Common myeloid progenitor, CD34-positive (primary cell): ENCODE measurements at regions of chr1 and their contacts with region 1.

Region 1: GRCh38 chr1:16289963-16290362 is 53.0 kb upstream of the CPLANE2 start:
- DNase-seq: no peak
- H3K4me3 ChIP-seq: no peak overlapping the region
- H3K27ac ChIP-seq: no peak overlapping the region
- H3K4me1 ChIP-seq: peaks cover 0 to 8% (median 0%) of the 10 kb centered on the region in 4 experiments
- H3K27me3 ChIP-seq: no peaks in the 10 kb centered on the region

Region 2: DNA sequence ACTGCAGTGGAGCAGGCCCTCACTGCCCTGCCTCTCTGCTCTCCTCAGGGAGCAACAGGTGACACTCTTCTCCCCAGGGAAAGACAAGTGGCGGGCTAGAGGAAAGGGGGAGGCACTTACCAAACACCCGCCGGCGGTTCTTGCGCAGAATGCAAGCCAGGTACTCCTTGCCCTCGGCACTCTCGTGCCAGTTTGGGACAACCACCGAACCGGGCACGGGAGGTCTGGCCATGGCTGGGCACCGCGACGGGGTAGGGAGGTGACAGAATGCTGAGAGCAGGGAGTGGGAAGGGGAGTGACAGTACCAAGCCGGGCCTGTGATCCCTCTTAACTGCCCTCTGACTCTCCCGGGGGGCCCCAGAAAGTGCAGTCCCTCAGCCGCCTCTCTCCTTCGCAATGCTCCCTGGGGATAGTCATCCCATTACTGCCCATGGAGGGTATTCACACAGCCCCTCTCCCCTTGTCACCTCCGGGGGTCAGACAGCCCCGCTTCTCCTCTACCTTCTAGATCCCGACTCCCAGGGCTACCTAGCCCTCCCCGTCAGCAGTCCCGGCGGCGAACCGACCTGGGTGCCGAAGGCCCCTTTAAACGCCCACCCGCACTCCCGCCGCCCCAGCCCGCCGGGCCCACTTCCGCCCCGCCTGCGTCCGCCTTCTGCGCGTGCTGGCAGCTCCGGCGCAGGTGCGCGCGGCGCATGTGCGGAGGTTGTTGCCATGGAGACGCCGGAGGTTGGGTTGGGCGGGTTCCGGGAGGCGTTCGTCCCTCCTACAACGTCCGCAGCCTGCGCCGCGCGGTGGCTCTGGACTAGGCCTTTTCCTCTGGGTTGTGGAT is 53.2 kb before region 1 on chr1 and contains the start of gene CPLANE2:
- CTCF ChIA-PET with region 1: no interaction called
- POLR2A ChIA-PET with region 1: no interaction called
- DNase-seq: peak; percentile 91 to 96 (median 95)
- H3K4me3 ChIP-seq: peak within 1 kb of the TSS; percentile 53 to 86 (median 80)
- H3K27ac ChIP-seq: peak within 1 kb of the TSS; percentile 79 to 94
- H3K4me1 ChIP-seq: peaks cover 5 to 21% (median 18%) of the 10 kb centered on the region in 4 experiments
- H3K27me3 ChIP-seq: no peaks in the 10 kb centered on the region

Region 3: GRCh38 chr1:16334655-16335340 is 44.8 kb after region 1 on chr1:
- CTCF ChIA-PET with region 1: no interaction called
- POLR2A ChIA-PET with region 1: no interaction called
- DNase-seq: peak in 2 of 3 donors; percentile 20 to 44
- H3K4me3 ChIP-seq: no peak overlapping the region
- H3K27ac ChIP-seq: no peak overlapping the region
- H3K4me1 ChIP-seq: peaks cover 0 to 2% (median 0%) of the 10 kb centered on the region in 4 experiments
- H3K27me3 ChIP-seq: no peaks in the 10 kb centered on the region

Region 4: GRCh38 chr1:16396591-16396990 is 106.6 kb after region 1 on chr1:
- CTCF ChIA-PET with region 1: no interaction called
- POLR2A ChIA-PET with region 1: no interaction called
- DNase-seq: no peak
- H3K4me3 ChIP-seq: no peak overlapping the region
- H3K27ac ChIP-seq: no peak overlapping the region
- H3K4me1 ChIP-seq: peaks cover 0 to 19% (median 9%) of the 10 kb centered on the region in 4 experiments
- H3K27me3 ChIP-seq: no peaks in the 10 kb centered on the region

Region 5: GRCh38 chr1:16434501-16434900 is 144.5 kb after region 1 on chr1:
- CTCF ChIA-PET with region 1: no interaction called
- POLR2A ChIA-PET with region 1: interaction called, 10 read pairs
- DNase-seq: peak in 2 of 3 donors; percentile 15 to 40
- H3K4me3 ChIP-seq: no peak overlapping the region
- H3K27ac ChIP-seq: no peak overlapping the region
- H3K4me1 ChIP-seq: peaks cover 0 to 8% (median 0%) of the 10 kb centered on the region in 4 experiments
- H3K27me3 ChIP-seq: no peaks in the 10 kb centered on the region

Region 6: DNA sequence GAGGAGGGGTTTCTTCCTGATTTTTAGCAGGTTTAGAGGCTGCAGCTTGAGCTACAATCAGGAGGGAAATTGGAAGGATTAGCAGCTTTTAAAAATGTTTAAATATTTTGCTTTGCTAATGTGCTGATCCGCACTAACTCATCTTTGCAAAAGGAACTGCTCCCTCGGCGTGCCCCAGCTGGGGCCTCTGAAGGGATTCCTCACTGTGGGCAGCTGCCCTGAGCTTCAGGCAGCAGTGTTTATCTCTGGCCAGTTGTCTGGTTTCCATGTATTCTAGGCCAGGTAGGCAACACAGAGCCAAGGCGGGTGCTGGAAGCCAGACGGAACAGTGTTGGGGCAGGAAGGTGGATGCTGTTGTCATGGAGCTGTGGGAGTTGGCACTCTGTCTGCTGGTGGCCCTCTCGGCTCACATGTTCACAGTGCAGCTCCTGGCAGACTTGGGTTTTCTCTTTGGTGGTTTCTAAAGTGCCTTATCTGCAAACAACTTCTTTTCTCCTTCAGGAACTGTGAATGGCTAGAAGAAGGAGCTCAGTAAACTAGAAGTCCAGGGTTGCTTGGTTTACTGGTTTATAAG is 169.5 kb after region 1 on chr1:
- CTCF ChIA-PET with region 1: no interaction called
- POLR2A ChIA-PET with region 1: no interaction called
- DNase-seq: no peak
- H3K4me3 ChIP-seq: no peak overlapping the region
- H3K27ac ChIP-seq: no peak overlapping the region
- H3K4me1 ChIP-seq: no peaks in the 10 kb centered on the region
- H3K27me3 ChIP-seq: no peaks in the 10 kb centered on the region